ENCODE measurements at regions of chr16 and their contacts with region 1.

Region 1: DNA sequence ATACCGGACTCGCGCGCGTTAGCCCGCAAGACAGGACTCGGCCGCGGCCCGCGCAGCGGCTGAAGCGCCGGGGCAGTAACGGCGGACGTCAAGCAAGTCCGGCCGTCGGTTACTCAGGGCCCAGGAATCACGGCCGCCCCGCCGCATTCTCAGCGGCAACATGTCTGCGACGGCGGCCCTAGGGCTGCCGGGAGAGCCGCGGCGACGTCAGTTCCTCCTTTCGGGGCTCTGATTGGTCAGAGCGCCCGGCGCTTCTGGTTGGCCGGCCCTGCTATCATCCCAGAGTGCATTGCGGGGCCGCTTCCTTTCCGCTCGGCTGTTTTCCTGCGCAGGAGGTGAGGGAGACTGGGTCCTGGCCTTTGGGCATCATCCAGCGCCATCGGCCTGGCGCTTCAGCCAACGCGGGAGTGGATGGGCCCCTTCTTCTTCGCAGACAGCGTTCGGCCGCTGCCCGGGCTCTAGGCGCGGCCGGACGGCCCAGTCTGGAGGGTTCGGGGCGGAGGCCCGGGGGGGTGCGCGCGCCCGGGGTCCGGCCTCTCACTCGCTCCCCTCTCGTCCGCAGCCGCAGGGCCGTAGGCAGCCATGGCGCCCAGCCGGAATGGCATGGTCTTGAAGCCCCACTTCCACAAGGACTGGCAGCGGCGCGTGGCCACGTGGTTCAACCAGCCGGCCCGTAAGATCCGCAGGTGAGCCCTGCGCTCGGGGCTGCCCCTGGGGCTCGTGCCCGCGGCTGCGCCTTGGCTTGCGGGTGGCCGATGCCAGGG is at the start of gene RPL13:
- DNase-seq: peak; percentile 91 to 94 (median 93)
- H3K4me3 ChIP-seq: peak within 1 kb of the TSS; percentile 73 to 85
- H3K4me3 Mint-ChIP-seq: peak within 1 kb of the TSS; percentile 95 to 99 (median 98)
- H3K27ac ChIP-seq: peak within 1 kb of the TSS; percentile 88
- H3K27ac Mint-ChIP-seq: peak within 1 kb of the TSS; percentile 97 to 99 (median 98)
- H3K4me1 ChIP-seq: peaks cover 58% of the 10 kb centered on the region
- H3K4me1 Mint-ChIP-seq: peaks cover 32 to 66% (median 50%) of the 10 kb centered on the region in 4 donors
- H3K27me3 ChIP-seq: no peaks in the 10 kb centered on the region
- H3K27me3 Mint-ChIP-seq: no peaks in the 10 kb centered on the region
- total RNA-seq, gene RPL13: 4,825 to 5,043 TPM

Region 2: GRCh38 chr16:89332902-89333245 is 227.7 kb before region 1 on chr16:
- CTCF ChIA-PET with region 1: interaction called, 6 read pairs
- POLR2A ChIA-PET with region 1: no interaction called
- intact Hi-C with region 1: loop called (anchors 1 kb)
- DNase-seq: peak in 1 of 5 donors; percentile 28
- H3K4me3 ChIP-seq: no peak overlapping the region
- H3K4me3 Mint-ChIP-seq: no peak overlapping the region
- H3K27ac ChIP-seq: no peak overlapping the region
- H3K27ac Mint-ChIP-seq: peak overlapping the region in 2 of 7 donors; percentile 36 to 87
- H3K4me1 ChIP-seq: peaks cover 85% of the 10 kb centered on the region
- H3K4me1 Mint-ChIP-seq: peaks cover 36 to 86% (median 67%) of the 10 kb centered on the region in 4 donors
- H3K27me3 ChIP-seq: no peaks in the 10 kb centered on the region
- H3K27me3 Mint-ChIP-seq: no peaks in the 10 kb centered on the region

Region 3: DNA sequence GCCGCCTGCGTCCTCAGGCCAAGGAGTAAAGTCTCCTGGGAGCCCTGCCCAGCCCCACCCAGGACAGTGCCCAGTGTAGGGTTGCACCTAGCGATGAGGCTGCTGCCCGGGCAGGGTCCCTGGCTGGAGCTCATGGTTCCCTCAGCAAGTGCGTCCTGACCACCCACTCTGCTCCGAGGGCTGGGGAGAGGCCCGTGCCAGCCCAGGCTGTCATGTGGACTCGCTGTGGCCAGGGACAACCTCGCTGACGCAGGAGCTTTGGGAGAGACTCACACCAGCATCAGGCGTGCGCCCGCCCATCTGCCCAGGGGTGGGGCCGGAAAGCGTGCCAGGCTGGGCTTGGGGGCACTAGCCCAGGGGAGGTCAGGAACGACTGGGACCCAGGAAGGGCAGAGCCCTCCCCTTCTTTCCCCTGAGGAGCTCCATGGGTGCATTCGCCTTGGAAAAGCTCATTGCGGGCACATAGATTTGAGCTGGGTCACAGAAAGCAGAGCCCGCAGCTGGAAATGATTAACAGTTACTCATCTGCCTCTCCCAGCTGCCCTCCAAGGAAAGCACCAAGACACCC is 72.6 kb after region 1 on chr16:
- CTCF ChIA-PET with region 1: no interaction called
- POLR2A ChIA-PET with region 1: no interaction called
- intact Hi-C with region 1: no loop called
- DNase-seq: no peak
- H3K4me3 ChIP-seq: no peak overlapping the region
- H3K4me3 Mint-ChIP-seq: no peak overlapping the region
- H3K27ac ChIP-seq: no peak overlapping the region
- H3K27ac Mint-ChIP-seq: no peak overlapping the region
- H3K4me1 ChIP-seq: no peaks in the 10 kb centered on the region
- H3K4me1 Mint-ChIP-seq: no peaks in the 10 kb centered on the region
- H3K27me3 ChIP-seq: no peaks in the 10 kb centered on the region
- H3K27me3 Mint-ChIP-seq: no peaks in the 10 kb centered on the region

Measured in CD4-positive, alpha-beta memory T cell (primary cell).